AG04449 (cell line): ENCODE measurements at regions of chr3 and their contacts with region 1.

Region 1: DNA sequence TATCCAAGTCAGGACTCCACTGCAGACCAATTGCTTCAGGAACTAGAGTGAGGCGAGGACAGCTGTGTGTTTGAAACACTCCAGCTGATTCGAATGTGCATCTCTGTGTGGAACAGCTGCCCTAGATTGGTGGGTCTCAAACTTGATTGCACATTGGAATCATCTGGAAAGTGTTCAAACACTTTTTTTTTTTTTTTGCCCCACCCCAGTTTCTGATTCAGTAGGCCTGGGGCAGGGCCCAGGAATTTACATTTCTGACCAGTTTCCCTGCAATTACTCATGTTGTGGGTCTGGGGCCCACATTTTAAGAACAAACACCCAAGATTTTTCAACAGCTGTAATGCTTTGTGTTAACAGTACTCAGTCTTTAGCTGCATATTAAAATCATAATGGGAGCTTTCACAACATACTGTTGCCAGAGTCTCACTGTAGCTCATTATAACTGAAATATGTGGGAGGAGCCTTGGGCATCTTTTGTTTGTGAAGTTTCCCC is 156.6 kb downstream of the NR1D2 start:
- DNase-seq: no peak
- H3K4me3 ChIP-seq: no peak overlapping the region
- CTCF ChIP-seq: no peak

Region 2: GRCh38 chr3:24088782-24089181 is 12.9 kb before region 1 on chr3:
- CTCF ChIA-PET with region 1: interaction called, 15 read pairs
- POLR2A ChIA-PET with region 1: no interaction called
- DNase-seq: no peak
- H3K4me3 ChIP-seq: no peak overlapping the region
- CTCF ChIP-seq: peak; percentile 50